ENCODE measurements at regions of chr16 and their contacts with region 1.

Region 1: GRCh38 chr16:82456683-82457082 is 170.1 kb upstream of the CDH13 start:
- DNase-seq: peak; percentile 67
- H3K4me3 ChIP-seq: no peak overlapping the region
- H3K27ac ChIP-seq: no peak overlapping the region
- H3K4me1 ChIP-seq: no peaks in the 10 kb centered on the region
- H3K27me3 ChIP-seq: no peaks in the 10 kb centered on the region
- CTCF ChIP-seq: peak; percentile 66

Region 2: DNA sequence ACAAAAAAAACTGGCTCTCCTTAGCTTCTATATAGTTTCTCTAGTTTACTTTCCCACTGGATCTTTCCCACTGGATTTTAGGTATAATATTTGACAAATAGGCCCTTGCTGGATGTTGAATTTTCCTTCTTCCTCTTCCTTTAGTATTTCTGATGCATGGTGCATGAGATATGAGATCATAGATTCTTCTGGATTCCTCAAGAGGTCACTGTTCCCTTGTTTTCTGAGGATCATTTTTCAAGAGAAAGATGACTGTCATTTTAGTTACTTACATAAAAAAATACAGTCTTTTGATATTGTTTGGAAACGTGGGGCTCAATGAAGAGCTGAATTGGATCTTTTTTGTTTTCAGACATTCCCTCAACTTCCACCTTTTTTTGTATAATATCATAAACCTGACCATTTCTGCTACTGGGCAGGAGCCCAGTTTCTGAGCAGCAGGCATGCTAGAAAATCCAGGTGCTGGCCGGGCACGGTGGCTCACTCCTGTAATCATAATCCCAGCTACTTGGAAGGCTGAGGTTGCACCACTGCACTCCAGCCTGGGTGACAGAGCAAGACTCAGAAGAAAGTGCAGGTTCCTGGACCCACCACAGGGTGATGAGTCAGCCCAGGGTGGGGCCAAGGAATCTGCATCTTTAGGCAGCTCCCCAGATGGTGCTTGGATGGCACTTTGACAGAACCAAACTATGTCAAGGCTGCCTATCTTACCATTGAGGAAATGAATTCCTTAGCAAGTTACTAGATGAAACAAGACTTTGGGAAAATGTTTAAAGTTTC is 515.7 kb before region 1 on chr16:
- intact Hi-C with region 1: loop called (anchors 10 kb)
- DNase-seq: no peak
- H3K4me3 ChIP-seq: no peak overlapping the region
- H3K27ac ChIP-seq: no peak overlapping the region
- H3K4me1 ChIP-seq: no peaks in the 10 kb centered on the region
- H3K27me3 ChIP-seq: no peaks in the 10 kb centered on the region
- CTCF ChIP-seq: peak; percentile 40

Region 3: DNA sequence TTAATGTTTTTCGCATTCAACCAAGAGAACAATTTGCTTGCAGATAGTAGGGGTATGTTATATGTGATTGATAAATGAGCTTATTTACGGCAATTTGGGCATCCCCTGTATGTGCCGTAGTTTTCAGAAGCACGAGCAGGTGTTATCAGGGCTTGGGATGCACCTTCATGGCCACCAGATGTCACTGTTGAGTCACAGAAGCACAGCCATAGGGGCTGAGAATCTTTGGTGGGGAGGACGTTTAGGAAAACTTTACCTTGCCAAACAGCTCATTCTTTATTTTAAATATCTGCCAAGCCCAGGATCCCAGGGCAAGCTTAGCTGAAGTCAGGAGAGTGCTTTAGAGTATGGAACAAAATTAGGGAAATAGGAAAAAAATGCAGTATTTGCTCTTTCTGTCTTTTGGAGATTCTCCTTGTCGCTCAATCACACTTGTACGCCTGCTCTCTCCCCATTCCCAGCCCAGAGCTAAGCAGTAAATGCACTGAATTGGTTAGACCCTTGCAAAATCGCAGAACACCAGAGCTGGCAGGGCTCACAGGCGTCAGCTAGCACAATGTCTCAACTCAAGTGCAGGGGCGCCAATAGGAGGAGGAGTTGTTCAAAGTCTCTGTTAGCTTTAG is 193.1 kb before region 1 on chr16:
- intact Hi-C with region 1: loop called (anchors 10 kb)
- DNase-seq: peak; percentile 64
- H3K4me3 ChIP-seq: no peak overlapping the region
- H3K27ac ChIP-seq: no peak overlapping the region
- H3K4me1 ChIP-seq: no peaks in the 10 kb centered on the region
- H3K27me3 ChIP-seq: peaks cover 5% of the 10 kb centered on the region
- CTCF ChIP-seq: peak; percentile 89